Activated CD8-positive, alpha-beta T cell treated with anti-CD3 and anti-CD28 coated beads, Interleukin-2, amount 10 ng/mL, durations not matched to agents 7 days and 5 days (primary cell): ENCODE measurements at regions of chr7 and their contacts with region 1.

Region 1: GRCh38 chr7:39623018-39623731 is at the start of gene RALA:
- DNase-seq: peak; percentile 93
- ATAC-seq: peak; percentile 97
- H3K4me3 Mint-ChIP-seq: peak within 1 kb of the TSS; percentile 98
- H3K27ac Mint-ChIP-seq: peak within 1 kb of the TSS; percentile 96
- H3K4me1 Mint-ChIP-seq: peaks cover 46% of the 10 kb centered on the region
- H3K27me3 Mint-ChIP-seq: no peaks in the 10 kb centered on the region
- total RNA-seq, gene RALA: 32.2 to 33.9 TPM

Region 2: DNA sequence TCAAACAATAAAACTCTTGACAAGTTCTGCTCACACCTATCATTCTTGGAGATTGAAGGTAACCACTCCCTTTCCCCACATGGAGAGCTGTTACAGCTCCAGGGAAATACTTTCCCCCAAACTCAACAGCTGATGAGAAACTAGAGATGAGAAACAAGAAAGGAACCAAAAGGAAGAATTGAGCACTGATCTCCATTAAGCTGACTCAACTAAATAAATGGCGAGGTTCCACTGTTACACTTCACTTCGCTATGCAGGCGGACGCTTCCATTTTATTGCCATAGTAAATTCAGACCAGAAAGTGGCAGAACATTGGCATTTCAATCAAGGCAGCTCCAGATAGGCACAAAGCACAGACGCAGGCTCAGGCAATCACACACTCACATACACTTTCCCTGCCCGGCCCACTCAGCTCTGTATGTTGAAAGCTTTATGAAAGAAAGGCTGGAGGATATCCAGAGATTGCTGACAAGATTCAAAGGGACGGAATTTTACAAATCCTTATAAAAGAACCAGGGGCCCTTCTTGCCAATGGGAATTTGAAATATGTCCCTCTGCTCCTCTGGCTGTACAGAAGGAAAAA is 68.5 kb before region 1 on chr7:
- CTCF ChIA-PET with region 1: no interaction called
- POLR2A ChIA-PET with region 1: no interaction called
- DNase-seq: no peak
- ATAC-seq: no peak
- H3K4me3 Mint-ChIP-seq: no peak overlapping the region
- H3K27ac Mint-ChIP-seq: no peak overlapping the region
- H3K4me1 Mint-ChIP-seq: no peaks in the 10 kb centered on the region
- H3K27me3 Mint-ChIP-seq: peaks cover 14% of the 10 kb centered on the region

Region 3: GRCh38 chr7:39589323-39590111 is 33.7 kb before region 1 on chr7:
- CTCF ChIA-PET with region 1: interaction called, 17 read pairs
- POLR2A ChIA-PET with region 1: interaction called, 10 read pairs
- DNase-seq: peak; percentile 84
- ATAC-seq: peak; percentile 87
- H3K4me3 Mint-ChIP-seq: peak overlapping the region; percentile 35
- H3K27ac Mint-ChIP-seq: peak overlapping the region; percentile 14
- H3K4me1 Mint-ChIP-seq: peaks cover 48% of the 10 kb centered on the region
- H3K27me3 Mint-ChIP-seq: no peaks in the 10 kb centered on the region

Region 4: GRCh38 chr7:39609113-39609934 is 13.9 kb before region 1 on chr7:
- CTCF ChIA-PET with region 1: interaction called, 3 read pairs
- POLR2A ChIA-PET with region 1: interaction called, 12 read pairs
- DNase-seq: no peak
- ATAC-seq: peak; percentile 72
- H3K4me3 Mint-ChIP-seq: peak overlapping the region; percentile 35
- H3K27ac Mint-ChIP-seq: no peak overlapping the region
- H3K4me1 Mint-ChIP-seq: peaks cover 48% of the 10 kb centered on the region
- H3K27me3 Mint-ChIP-seq: peaks cover 8% of the 10 kb centered on the region

Region 5: DNA sequence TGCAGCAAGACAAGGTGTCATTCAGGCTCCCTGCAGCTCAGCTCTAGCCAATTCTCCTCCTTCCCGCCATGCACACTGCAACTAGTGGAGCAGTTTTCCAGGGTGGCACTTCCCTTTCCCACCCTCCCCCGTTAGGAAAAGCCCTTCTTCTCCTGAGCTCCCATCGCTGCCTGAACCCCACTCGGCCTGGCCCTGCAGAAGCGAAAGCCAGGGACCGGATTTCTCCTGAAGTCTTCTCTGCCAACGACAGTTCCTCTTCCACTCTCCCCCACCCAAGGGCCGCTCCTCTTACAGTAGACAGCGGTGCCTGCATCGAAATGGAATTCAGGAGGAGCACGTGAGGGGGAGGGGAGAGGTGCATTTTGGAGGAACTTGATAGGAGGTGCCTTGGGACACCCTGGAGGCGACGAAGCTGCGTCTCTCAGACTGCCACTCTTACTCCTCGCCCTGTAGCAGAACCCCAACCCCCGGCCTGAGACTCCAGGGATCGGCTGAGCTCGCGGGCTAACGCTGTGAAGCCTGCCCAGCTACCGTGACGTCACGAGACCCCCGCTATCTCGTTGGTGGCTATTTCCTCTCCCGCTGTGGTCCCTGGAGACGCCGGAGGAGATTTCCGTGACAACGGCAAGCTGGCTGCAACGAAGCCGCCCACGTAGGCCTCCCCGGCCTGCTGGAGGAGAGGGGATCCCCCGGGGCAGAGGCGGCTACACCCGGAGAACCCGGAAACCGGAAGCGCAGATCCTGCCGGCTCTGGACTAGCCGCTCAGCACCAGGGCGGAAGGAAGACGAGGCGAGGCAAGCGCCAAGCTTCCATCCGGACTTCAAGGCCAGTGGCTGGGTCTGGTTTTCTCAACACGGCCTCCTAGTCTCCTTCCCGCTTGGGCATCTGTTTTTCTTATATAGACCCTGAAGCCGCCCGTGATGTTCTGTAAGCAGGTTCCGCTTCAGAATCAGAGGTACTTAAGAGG is 109.9 kb after region 1 on chr7:
- CTCF ChIA-PET with region 1: interaction called, 4 read pairs
- POLR2A ChIA-PET with region 1: interaction called, 16 read pairs
- DNase-seq: peak; percentile 96
- ATAC-seq: peak; percentile 93
- H3K4me3 Mint-ChIP-seq: peak overlapping the region; percentile 85
- H3K27ac Mint-ChIP-seq: peak overlapping the region; percentile 97
- H3K4me1 Mint-ChIP-seq: peaks cover 47% of the 10 kb centered on the region
- H3K27me3 Mint-ChIP-seq: no peaks in the 10 kb centered on the region

Region 6: DNA sequence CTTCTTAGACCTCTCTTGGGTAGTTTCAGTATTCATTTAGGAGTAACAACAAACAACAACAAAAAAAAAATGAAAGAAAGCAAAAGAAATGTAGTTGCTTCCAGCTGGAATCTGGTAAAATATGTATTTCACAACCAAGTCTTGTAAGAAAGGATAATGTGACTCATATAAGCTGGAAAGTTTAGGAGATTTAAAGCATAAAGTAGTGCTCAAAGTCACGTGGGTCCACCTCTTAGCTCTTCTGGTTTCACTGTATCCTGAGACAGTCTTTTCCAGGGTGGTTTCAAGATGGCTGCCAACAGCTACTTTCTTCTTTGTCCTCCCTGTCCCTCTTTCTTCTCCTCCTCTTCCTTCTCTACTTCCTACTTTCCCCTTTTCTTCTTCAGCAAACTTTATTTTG is 257.4 kb after region 1 on chr7:
- CTCF ChIA-PET with region 1: no interaction called
- POLR2A ChIA-PET with region 1: no interaction called
- DNase-seq: no peak
- ATAC-seq: no peak
- H3K4me3 Mint-ChIP-seq: no peak overlapping the region
- H3K27ac Mint-ChIP-seq: no peak overlapping the region
- H3K4me1 Mint-ChIP-seq: no peaks in the 10 kb centered on the region
- H3K27me3 Mint-ChIP-seq: peaks cover 19% of the 10 kb centered on the region